ENCODE measurements at regions of chr3 and their contacts with region 1.

Region 1: DNA sequence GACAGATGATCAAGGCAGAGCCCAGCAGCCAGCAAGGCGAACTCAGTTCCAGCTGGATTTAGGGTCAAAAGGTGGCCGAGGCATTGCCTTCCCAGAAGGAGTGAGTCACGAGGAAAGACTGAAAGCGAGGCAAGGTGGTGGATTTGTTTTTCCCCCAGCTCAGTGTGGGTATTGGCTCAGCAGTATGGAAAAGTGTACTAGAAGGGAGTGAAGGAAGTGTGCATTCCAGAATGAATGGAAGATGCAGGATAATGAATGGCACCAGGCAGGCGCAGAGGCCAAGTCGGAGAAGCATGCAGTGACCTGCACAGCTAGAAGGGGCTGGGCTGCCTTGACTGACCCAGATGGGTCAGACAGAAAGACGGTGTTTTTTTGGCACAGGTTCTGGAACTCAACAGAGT is 46.3 kb downstream of the FOXP1 start:
- DNase-seq: peak; percentile 87 to 90
- ATAC-seq: peak; percentile 87
- H3K4me3 ChIP-seq: no peak overlapping the region
- H3K27ac ChIP-seq: peak overlapping the region; percentile 47 to 86
- H3K4me1 ChIP-seq: peaks cover 7 to 14% of the 10 kb centered on the region in 2 donors
- H3K27me3 ChIP-seq: no peaks in the 10 kb centered on the region

Region 2: DNA sequence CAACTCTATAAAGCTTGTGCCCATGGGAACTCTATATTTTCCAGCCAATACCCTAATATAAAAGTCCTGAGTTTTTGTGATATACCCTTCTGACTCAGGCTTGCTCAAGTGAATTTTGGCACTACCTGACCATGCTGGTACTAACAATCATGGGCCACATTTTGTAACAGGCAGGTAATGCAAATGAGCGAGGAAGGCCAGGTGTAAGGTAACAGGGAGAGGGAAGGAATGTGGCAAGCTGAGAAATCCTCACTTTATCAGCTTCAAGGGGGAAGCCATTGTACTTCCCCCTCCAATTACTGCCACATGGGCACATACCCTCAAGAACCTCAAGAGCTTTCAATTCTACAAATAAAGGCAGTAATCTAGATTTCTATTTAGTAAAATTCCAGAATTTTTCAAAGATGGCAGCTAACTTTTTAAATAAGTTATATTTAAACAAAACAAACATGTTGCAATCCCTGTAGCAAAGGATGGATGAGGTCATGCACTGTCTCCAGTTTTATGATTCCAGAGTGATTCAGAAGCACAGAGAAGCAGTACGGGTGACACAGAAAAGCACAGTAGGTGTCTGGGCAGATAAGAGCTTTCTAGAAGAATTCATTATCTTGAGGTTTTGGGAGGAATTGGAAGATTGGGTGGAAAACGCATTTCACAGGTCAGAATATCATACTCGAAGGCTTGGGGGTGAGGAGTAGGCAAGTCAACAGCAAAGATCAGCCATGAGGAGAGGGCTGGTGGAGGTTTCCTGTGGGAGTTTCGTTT is 41.3 kb before region 1 on chr3:
- intact Hi-C with region 1: loop called (anchors 5 kb)
- DNase-seq: no peak
- ATAC-seq: peak; percentile 69
- H3K4me3 ChIP-seq: no peak overlapping the region
- H3K27ac ChIP-seq: peak overlapping the region; percentile 70 to 91
- H3K4me1 ChIP-seq: peaks cover 4 to 11% of the 10 kb centered on the region in 2 donors
- H3K27me3 ChIP-seq: no peaks in the 10 kb centered on the region

Region 3: DNA sequence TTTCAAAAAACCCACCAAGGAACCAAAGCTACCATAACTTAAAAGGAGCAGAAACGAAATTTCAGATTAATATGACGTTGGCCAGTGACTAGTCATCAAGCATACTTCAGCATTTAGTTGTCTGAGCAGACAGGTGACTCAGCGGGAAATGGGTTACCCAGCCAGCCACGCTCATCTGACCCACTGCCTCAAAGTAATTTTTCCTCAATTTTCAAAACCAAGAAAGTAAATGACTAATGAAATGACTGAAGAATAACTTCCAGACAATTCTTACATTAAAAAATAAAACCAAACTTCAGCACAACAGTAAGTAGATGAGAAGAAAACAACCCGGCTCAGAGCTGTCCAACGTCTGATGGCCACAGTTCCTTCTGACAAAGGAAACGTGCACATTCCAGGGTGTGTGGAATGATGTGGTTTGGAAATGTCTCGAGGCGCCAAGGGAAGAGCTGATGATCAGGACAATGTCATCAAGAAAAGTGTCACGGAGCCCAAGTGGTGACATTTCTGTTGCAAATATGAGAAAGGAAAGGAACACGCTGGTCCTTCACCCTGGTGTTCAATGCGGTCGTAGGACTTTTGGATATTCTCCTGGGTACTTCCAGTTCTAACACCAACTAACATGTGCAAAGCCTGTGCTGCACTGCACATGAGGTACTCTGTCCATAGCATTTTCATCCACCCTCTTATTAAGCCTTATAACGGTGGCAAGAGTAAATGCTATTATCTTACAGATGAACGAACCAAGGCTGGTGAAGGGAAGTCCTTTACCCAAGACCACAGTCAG is 32.8 kb before region 1 on chr3:
- intact Hi-C with region 1: loop called (anchors 5 kb)
- DNase-seq: peak in 1 of 2 donors; percentile 75
- ATAC-seq: no peak
- H3K4me3 ChIP-seq: no peak overlapping the region
- H3K27ac ChIP-seq: no peak overlapping the region
- H3K4me1 ChIP-seq: no peaks in the 10 kb centered on the region
- H3K27me3 ChIP-seq: no peaks in the 10 kb centered on the region

Region 4: DNA sequence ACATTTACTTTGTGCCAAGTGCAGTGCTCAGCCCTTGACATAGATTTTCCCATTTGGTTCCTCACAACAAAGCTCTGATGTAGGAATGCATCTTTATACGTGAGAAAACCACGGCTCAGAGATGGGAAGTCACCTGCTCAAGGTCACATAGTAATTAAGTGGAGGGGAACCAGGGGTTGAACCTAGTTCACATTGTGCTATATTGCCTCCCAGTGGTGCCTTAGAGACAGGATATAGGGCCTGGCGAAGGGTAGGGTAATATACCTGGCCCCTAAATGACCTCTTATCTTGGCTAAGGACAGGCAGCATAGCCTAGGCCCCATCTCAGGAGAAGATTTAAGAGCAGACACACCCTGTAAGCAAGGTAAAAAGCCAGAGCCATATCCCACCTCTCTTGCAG is 25.2 kb before region 1 on chr3:
- intact Hi-C with region 1: loop called in 1 of 2 experiments (anchors 1 kb)
- DNase-seq: no peak
- ATAC-seq: no peak
- H3K4me3 ChIP-seq: no peak overlapping the region
- H3K27ac ChIP-seq: peak overlapping the region in 1 of 2 donors; percentile 76
- H3K4me1 ChIP-seq: peaks cover 4 to 5% of the 10 kb centered on the region in 2 donors
- H3K27me3 ChIP-seq: no peaks in the 10 kb centered on the region

Measured in aorta (tissue), 5 donors.